ENCODE measurements at regions of chr22 and their contacts with region 1.

Region 1: GRCh38 chr22:21961886-21962654 is 9.4 kb upstream of the PPM1F start:
- DNase-seq: no peak
- ATAC-seq: no peak
- H3K4me3 ChIP-seq: no peak overlapping the region
- H3K27ac ChIP-seq: no peak overlapping the region
- H3K4me1 ChIP-seq: peaks cover 0 to 45% of the 10 kb centered on the region in 2 experiments; a peak in 2 of 5 replicates
- H3K27me3 ChIP-seq: no peaks in the 10 kb centered on the region
- CTCF ChIP-seq: no peak
- EP300 ChIP-seq: no peak
- POLR2A ChIP-seq: no peak; the same call in 1 of the 2 replicates
- RAD21 ChIP-seq: no peak

Region 2: DNA sequence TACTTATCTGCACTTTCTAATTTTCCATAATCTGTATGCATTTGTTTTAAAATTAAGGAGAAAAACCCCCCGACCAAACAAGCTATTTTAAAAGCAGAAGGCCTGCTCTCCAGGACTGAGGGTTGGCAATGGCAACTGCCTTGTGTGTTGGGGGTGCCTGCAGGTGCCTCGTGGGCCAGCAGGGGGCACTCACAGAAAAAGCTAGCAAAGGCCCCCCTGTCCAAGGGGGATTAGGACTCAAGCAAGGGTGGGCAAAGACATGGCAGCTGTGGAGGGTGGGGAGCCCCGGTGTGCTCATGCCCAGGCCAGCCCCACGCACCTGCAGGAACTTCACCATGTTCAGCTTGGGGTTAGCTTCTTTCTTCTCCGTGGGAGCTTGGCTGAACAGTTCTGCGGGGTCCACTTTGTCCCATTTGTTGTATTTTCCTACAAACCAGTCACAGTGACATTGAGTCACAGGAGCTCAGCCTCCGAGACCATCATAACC is 10.3 kb after region 1 on chr22:
- CTCF ChIA-PET with region 1: no interaction called
- POLR2A ChIA-PET with region 1: interaction called, 382 read pairs
- in situ Hi-C with region 1: no loop called
- intact Hi-C with region 1: no loop called
- DNase-seq: peak; percentile 91 to 100 (median 99)
- ATAC-seq: peak; percentile 86
- H3K4me3 ChIP-seq: no peak overlapping the region
- H3K27ac ChIP-seq: no peak overlapping the region
- H3K4me1 ChIP-seq: peaks cover 0 to 19% of the 10 kb centered on the region in 2 experiments; a peak in 1 of 5 replicates
- H3K27me3 ChIP-seq: no peaks in the 10 kb centered on the region
- CTCF ChIP-seq: peak; percentile 97 to 100 (median 99)
- EP300 ChIP-seq: no peak
- POLR2A ChIP-seq: no peak
- RAD21 ChIP-seq: peak in 1 of 2 experiments; percentile 88; a peak in 2 of 4 replicates